Activated naive CD4-positive, alpha-beta T cell treated with anti-CD3 and anti-CD28 coated beads for 36 hours (primary cell): ENCODE measurements at regions of chr7 and their contacts with region 1.

Region 1: GRCh38 chr7:25259587-25260243 is 31.4 kb upstream of the NPVF start:
- DNase-seq: peak; percentile 84
- H3K4me3 Mint-ChIP-seq: peak overlapping the region; percentile 20
- H3K27ac Mint-ChIP-seq: no peak overlapping the region
- H3K4me1 Mint-ChIP-seq: peaks cover 24% of the 10 kb centered on the region
- H3K27me3 Mint-ChIP-seq: no peaks in the 10 kb centered on the region

Region 2: DNA sequence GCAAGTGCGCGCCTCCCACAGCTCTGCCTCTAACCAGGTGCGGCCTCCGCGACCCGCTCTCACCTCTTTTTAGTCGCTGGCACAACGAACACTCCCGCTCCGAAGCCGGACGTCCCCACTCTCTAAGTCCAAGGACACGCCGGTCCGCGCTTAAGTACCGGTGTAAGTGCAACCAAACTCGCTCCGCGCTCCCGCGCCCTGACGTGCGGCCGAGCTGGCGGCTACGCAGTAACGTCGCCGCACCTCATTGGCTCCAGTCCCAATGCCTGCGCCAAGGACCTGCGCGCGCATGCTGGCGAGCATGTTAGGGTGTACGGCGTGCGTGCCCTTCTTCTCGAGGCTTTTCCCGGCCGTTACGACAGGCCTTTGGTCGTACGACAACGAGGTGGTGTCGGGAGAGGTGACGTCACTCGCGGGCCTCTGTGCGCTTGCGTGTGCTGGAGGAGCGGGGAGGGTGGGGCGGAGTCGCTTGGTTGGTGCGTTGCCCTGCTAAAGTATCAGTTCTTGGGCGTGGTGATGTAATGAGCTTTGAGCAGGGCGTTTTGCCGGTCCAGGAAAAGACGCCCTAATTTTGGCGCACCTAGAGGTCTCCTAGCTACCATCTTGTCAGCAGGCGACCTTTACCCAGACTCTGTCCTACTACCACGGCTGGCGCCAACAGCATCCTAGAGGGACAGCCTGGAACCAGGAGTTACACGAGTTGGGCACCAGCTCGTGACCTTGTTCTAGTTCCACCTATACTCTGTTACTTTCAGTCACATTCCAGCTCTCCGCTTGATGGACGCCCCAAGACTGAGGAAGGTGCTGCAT is 134.4 kb before region 1 on chr7 and contains the start of gene CYCS:
- CTCF ChIA-PET with region 1: no interaction called
- intact Hi-C with region 1: no loop called
- DNase-seq: peak; percentile 100
- H3K4me3 Mint-ChIP-seq: peak within 1 kb of the TSS; percentile 93
- H3K27ac Mint-ChIP-seq: peak within 1 kb of the TSS; percentile 98
- H3K4me1 Mint-ChIP-seq: peaks cover 31% of the 10 kb centered on the region
- H3K27me3 Mint-ChIP-seq: no peaks in the 10 kb centered on the region
- total RNA-seq, gene CYCS: 213 to 224 TPM

Region 3: GRCh38 chr7:25314731-25315267 is 55.1 kb after region 1 on chr7:
- CTCF ChIA-PET with region 1: interaction called, 6 read pairs
- intact Hi-C with region 1: loop called (anchors 5 kb)
- DNase-seq: no peak
- H3K4me3 Mint-ChIP-seq: no peak overlapping the region
- H3K27ac Mint-ChIP-seq: no peak overlapping the region
- H3K4me1 Mint-ChIP-seq: peaks cover 3% of the 10 kb centered on the region
- H3K27me3 Mint-ChIP-seq: no peaks in the 10 kb centered on the region

Region 4: GRCh38 chr7:25353732-25354131 is 94.0 kb after region 1 on chr7:
- CTCF ChIA-PET with region 1: interaction called, 5 read pairs
- intact Hi-C with region 1: loop called (anchors 1 kb)
- DNase-seq: no peak
- H3K4me3 Mint-ChIP-seq: no peak overlapping the region
- H3K27ac Mint-ChIP-seq: no peak overlapping the region
- H3K4me1 Mint-ChIP-seq: peaks cover 11% of the 10 kb centered on the region
- H3K27me3 Mint-ChIP-seq: no peaks in the 10 kb centered on the region

Region 5: DNA sequence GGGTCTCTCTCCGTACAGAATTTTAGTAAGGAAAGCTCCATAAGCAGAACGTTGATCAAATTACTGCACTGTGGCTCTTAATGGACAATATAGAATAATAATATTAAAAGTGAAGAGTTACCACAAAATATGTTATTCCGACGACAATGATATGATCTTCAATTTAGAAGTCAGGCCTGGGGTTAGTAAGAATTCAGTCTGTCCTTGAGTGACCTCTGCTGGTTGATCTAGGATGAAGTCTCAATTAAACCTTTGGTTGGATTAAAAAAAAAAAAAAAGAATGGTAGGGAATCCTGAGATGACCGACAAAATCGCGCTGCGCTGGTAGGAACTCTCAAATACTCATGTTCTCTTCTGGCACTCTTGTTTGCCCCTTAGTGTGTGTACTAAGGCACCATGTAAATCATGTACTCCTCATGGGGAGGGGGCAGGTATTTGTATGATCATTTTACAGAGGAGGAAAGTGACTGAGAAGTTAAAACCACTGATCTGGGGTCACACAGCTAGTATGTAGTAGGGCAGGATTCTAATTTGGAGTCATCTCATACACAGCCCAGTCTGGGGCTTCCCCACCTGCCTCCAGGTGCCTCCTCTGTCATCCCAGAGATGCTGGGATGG is 129.9 kb after region 1 on chr7:
- CTCF ChIA-PET with region 1: interaction called, 94 read pairs
- intact Hi-C with region 1: loop called (anchors 1 kb)
- DNase-seq: peak; percentile 21
- H3K4me3 Mint-ChIP-seq: no peak overlapping the region
- H3K27ac Mint-ChIP-seq: no peak overlapping the region
- H3K4me1 Mint-ChIP-seq: peaks cover 3% of the 10 kb centered on the region
- H3K27me3 Mint-ChIP-seq: peaks cover 2% of the 10 kb centered on the region

Region 6: GRCh38 chr7:25559581-25560367 is 300.1 kb after region 1 on chr7:
- CTCF ChIA-PET with region 1: interaction called, 99 read pairs
- intact Hi-C with region 1: no loop called
- DNase-seq: no peak
- H3K4me3 Mint-ChIP-seq: no peak overlapping the region
- H3K27ac Mint-ChIP-seq: no peak overlapping the region
- H3K4me1 Mint-ChIP-seq: peaks cover 11% of the 10 kb centered on the region
- H3K27me3 Mint-ChIP-seq: no peaks in the 10 kb centered on the region